ENCODE measurements at regions of chr15 and their contacts with region 1.

Region 1: GRCh38 chr15:48877630-48878595 is at the start of gene EID1:
- DNase-seq: peak; percentile 92
- ATAC-seq: peak; percentile 94
- H3K4me3 ChIP-seq: peak within 1 kb of the TSS; percentile 83
- H3K27ac ChIP-seq: peak within 1 kb of the TSS; percentile 68
- H3K4me1 ChIP-seq: peaks cover 24% of the 10 kb centered on the region
- H3K27me3 ChIP-seq: no peaks in the 10 kb centered on the region
- CTCF ChIP-seq: no peak
- total RNA-seq, gene EID1: 98.7 and 115 TPM in 2 replicates

Region 2: GRCh38 chr15:50415749-50416404 is 1538.0 kb after region 1 on chr15:
- CTCF ChIA-PET with region 1: interaction called, 12 read pairs
- POLR2A ChIA-PET with region 1: no interaction called
- intact Hi-C with region 1: no loop called
- DNase-seq: no peak
- ATAC-seq: no peak
- H3K4me3 ChIP-seq: no peak overlapping the region
- H3K27ac ChIP-seq: no peak overlapping the region
- H3K4me1 ChIP-seq: no peaks in the 10 kb centered on the region
- H3K27me3 ChIP-seq: no peaks in the 10 kb centered on the region
- CTCF ChIP-seq: no peak

Measured in PC-3 (cell line).